ENCODE measurements at regions of chr3 and their contacts with region 1.

Region 1: DNA sequence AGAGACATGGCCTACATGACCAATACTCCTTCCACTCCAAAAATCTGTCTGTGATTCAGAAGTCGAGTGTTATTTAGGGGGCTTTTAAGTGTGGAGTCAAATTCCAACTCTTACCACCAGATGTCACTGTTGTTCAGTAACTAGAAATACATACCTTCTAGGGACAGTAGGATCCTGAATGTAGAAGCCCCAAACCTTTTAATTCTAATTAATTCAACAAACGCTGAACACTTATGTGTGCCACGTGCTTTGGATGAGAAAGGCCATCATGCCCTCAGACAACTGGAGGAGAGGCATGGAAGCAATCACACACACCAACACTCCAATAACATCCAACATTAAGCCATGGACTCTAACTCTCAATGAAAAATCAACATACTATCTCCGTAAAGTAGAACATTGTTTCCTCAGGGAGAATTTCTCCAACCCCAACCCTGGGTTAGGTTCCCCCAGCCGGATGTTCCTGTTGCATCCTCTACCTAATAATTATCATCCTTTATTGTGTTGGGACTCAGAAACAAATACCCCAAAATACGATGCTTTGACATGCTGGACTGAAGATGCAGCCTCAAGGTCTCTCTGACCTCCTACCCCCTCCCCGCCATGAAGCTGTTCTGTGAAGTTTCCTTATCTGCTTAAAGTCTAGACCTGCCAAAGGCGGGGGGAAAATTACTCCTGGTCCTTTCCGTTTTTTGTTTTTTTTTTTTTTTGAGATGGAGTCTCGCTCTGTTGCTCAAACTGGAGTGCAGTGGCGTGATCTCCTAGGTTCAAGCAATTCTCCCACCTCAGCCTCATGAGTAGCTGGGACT is 8.0 kb upstream of the CCDC13 start:
- DNase-seq: peak in 1 of 2 experiments; percentile 55
- H3K4me3 ChIP-seq: no peak overlapping the region
- H3K27ac ChIP-seq: no peak overlapping the region
- H3K4me1 ChIP-seq: no peaks in the 10 kb centered on the region
- H3K27me3 ChIP-seq: no peaks in the 10 kb centered on the region
- CTCF ChIP-seq: peak; percentile 86

Region 2: DNA sequence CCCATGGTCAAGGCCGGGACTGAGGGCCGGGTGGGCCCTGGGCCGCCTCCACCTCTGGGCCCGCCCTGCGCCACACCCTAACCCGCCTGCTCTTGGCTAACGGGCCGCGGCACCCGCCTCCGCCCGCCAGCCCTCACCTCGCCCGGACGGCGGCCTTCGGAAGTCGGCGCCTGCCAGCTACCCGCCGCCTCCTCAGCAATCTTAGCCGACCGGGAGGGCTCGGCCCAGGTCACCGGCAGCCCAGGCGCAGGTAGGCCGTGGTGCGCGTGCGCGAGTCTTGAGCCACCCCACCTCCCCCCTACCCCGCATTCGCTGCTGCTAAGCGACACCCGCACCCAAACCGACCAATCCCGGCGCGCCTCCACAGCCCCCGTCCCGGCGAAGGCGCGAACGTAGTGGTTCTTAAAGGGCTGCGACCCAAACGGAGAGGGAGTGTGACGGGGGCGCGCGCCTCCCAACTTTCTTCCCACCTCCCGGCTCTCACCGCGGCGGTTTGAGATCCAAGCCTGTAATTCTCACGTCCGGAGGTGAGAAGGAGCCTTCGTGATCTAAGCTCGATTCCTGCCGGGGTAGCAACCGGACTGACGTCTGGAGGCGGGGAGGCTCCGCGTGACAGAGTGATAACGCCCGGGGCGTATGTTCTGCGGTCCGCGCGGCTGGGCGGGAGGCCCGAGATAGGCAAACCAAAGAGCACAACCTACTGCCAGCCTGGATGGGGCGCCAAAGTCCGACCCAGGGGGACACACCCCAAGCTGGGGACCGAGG is 199.2 kb before region 1 on chr3 and contains the start of gene SEC22C:
- CTCF ChIA-PET with region 1: interaction called, 10 read pairs
- POLR2A ChIA-PET with region 1: no interaction called
- intact Hi-C with region 1: no loop called
- DNase-seq: peak; percentile 79 to 95
- H3K4me3 ChIP-seq: peak within 1 kb of the TSS; percentile 63
- H3K27ac ChIP-seq: no peak within 1 kb of the TSS; the same call in 1 of the 2 replicates
- H3K4me1 ChIP-seq: peaks cover 21% of the 10 kb centered on the region
- H3K27me3 ChIP-seq: no peaks in the 10 kb centered on the region
- CTCF ChIP-seq: no peak; the same call in 1 of the 2 replicates
- total RNA-seq, gene SEC22C: 38.1 and 42.4 TPM in 2 replicates